IMR-90 (cell line): ENCODE measurements at regions of chr5 and their contacts with region 1.

Region 1: GRCh38 chr5:157328277-157328912 is 62.5 kb downstream of the CYFIP2 start:
- DNase-seq: peak; percentile 81
- ATAC-seq: peak; percentile 100
- H3K4me3 ChIP-seq: peak overlapping the region; percentile 13; the same call in 1 of the 2 replicates
- H3K27ac ChIP-seq: no peak overlapping the region
- H3K4me1 ChIP-seq: no peaks in the 10 kb centered on the region
- H3K27me3 ChIP-seq: no peaks in the 10 kb centered on the region
- CTCF ChIP-seq: peak; percentile 97
- POLR2A ChIP-seq: peak; percentile 41; the same call in 1 of the 2 replicates
- RAD21 ChIP-seq: peak; percentile 98

Region 2: DNA sequence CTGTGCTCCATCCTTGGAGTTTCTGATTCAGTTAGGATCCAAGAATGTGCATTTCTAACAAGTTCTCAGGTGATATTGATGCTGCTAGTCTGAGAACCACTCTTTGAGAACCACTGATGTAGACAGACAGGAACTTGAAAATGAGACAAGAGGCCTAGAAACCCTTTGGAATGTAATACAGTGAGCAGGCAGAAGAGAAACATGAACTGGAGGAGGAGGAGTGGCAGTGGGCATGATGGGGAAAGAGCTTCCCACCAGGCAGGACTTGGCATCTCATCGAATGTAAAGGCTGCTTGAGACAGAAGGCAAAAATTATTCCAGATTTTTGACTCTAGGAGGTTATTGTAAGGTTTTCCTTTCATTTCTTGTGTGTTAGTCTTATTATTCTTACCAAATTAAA is 1297.2 kb before region 1 on chr5:
- CTCF ChIA-PET with region 1: no interaction called
- POLR2A ChIA-PET with region 1: no interaction called
- dilution Hi-C with region 1: no loop called
- in situ Hi-C with region 1: no loop called
- intact Hi-C with region 1: no loop called
- DNase-seq: peak; percentile 3
- ATAC-seq: peak; percentile 48
- H3K4me3 ChIP-seq: no peak overlapping the region
- H3K27ac ChIP-seq: no peak overlapping the region
- H3K4me1 ChIP-seq: peaks cover 3% of the 10 kb centered on the region; the same call in 1 of the 2 replicates
- H3K27me3 ChIP-seq: no peaks in the 10 kb centered on the region
- CTCF ChIP-seq: no peak
- POLR2A ChIP-seq: no peak
- RAD21 ChIP-seq: no peak

Region 3: DNA sequence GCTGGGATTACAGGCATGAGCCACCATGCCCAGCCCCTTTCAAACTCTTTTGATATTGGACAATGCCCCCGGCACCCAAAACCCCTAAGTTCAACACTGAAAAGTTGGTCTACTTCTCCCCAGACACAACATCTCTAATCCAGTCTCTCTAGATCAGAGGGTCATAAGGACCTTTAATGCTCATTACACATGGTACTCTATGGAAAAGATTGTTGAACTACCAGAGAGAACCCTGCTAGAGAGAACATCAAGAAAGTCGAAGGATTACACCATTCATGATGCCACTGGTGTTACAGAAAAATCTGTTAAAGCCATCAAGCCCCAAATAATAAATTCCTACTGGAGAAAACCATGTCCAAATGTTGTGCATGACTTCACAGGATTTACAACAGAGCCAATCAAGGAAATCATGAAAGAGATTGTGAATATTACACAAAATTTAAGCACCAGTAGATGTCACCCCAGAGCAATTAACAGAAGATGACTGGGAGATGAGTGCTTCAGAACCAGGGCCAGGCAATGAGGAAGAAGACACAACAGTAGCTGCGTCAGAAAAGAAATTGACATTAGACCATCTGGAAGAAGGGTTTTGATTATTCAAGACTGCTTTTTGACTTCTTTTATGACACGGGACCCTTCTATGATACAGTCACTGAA is 103.3 kb after region 1 on chr5:
- CTCF ChIA-PET with region 1: no interaction called
- POLR2A ChIA-PET with region 1: no interaction called
- dilution Hi-C with region 1: no loop called
- in situ Hi-C with region 1: no loop called
- intact Hi-C with region 1: loop called (anchors 1 kb)
- DNase-seq: peak; percentile 69
- ATAC-seq: peak; percentile 98
- H3K4me3 ChIP-seq: no peak overlapping the region
- H3K27ac ChIP-seq: no peak overlapping the region
- H3K4me1 ChIP-seq: no peaks in the 10 kb centered on the region
- H3K27me3 ChIP-seq: no peaks in the 10 kb centered on the region
- CTCF ChIP-seq: peak; percentile 59
- POLR2A ChIP-seq: no peak
- RAD21 ChIP-seq: peak; percentile 65

Region 4: DNA sequence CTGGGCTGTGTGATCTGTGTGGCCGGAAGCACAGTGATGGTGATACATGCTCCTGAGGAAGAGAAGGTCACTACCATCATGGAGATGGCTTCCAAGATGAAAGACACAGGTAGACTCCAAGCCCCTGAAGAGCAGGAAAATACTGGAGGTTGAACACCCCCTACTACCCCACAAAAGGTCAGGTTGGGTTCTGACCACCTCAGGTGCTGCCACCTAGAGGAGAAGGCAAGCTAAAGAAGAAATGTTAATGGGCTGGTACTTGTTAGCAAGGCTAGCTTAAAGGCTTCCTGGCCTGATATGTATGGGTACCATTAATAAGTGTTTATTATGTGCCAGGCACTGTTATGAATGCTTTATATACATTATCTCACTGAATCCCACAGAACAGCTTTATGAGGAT is 143.3 kb after region 1 on chr5:
- CTCF ChIA-PET with region 1: interaction called, 14 read pairs
- POLR2A ChIA-PET with region 1: no interaction called
- dilution Hi-C with region 1: no loop called
- in situ Hi-C with region 1: no loop called
- intact Hi-C with region 1: no loop called
- DNase-seq: peak; percentile 33
- ATAC-seq: peak; percentile 58
- H3K4me3 ChIP-seq: no peak overlapping the region
- H3K27ac ChIP-seq: no peak overlapping the region
- H3K4me1 ChIP-seq: peaks cover 9% of the 10 kb centered on the region; the same call in 1 of the 2 replicates
- H3K27me3 ChIP-seq: no peaks in the 10 kb centered on the region
- CTCF ChIP-seq: peak; percentile 55
- POLR2A ChIP-seq: no peak
- RAD21 ChIP-seq: peak; percentile 39; the same call in 1 of the 2 replicates

Region 5: GRCh38 chr5:157731272-157732129 is 403.1 kb after region 1 on chr5 and contains the start of gene THG1L:
- CTCF ChIA-PET with region 1: no interaction called
- POLR2A ChIA-PET with region 1: no interaction called
- dilution Hi-C with region 1: no loop called
- in situ Hi-C with region 1: loop called (anchors 10 kb)
- intact Hi-C with region 1: no loop called
- DNase-seq: peak; percentile 97
- ATAC-seq: peak; percentile 99
- H3K4me3 ChIP-seq: peak within 1 kb of the TSS; percentile 65
- H3K27ac ChIP-seq: peak within 1 kb of the TSS; percentile 87
- H3K4me1 ChIP-seq: no peaks in the 10 kb centered on the region
- H3K27me3 ChIP-seq: no peaks in the 10 kb centered on the region
- CTCF ChIP-seq: no peak
- POLR2A ChIP-seq: peak; percentile 85
- RAD21 ChIP-seq: no peak
- total RNA-seq, gene THG1L: 20.4 and 32.5 TPM in 2 replicates

Region 6: GRCh38 chr5:157812086-157812485 is 483.7 kb after region 1 on chr5:
- CTCF ChIA-PET with region 1: no interaction called
- POLR2A ChIA-PET with region 1: no interaction called
- dilution Hi-C with region 1: no loop called
- in situ Hi-C with region 1: no loop called
- intact Hi-C with region 1: no loop called
- DNase-seq: no peak
- ATAC-seq: no peak
- H3K4me3 ChIP-seq: no peak overlapping the region
- H3K27ac ChIP-seq: no peak overlapping the region; the same call in 1 of the 2 replicates
- H3K4me1 ChIP-seq: peaks cover 2% of the 10 kb centered on the region; the same call in 1 of the 2 replicates
- H3K27me3 ChIP-seq: no peaks in the 10 kb centered on the region
- CTCF ChIP-seq: no peak
- POLR2A ChIP-seq: no peak
- RAD21 ChIP-seq: no peak